Activated naive CD4-positive, alpha-beta T cell treated with anti-CD3 and anti-CD28 coated beads for 36 hours (primary cell): ENCODE measurements at regions of chr10 and their contacts with region 1.

Region 1: GRCh38 chr10:117216611-117217195 is 19.4 kb downstream of the KCNK18 start:
- DNase-seq: peak; percentile 64
- H3K4me3 Mint-ChIP-seq: peak overlapping the region; percentile 70
- H3K27ac Mint-ChIP-seq: no peak overlapping the region
- H3K4me1 Mint-ChIP-seq: no peaks in the 10 kb centered on the region
- H3K27me3 Mint-ChIP-seq: peaks cover 35% of the 10 kb centered on the region

Region 2: DNA sequence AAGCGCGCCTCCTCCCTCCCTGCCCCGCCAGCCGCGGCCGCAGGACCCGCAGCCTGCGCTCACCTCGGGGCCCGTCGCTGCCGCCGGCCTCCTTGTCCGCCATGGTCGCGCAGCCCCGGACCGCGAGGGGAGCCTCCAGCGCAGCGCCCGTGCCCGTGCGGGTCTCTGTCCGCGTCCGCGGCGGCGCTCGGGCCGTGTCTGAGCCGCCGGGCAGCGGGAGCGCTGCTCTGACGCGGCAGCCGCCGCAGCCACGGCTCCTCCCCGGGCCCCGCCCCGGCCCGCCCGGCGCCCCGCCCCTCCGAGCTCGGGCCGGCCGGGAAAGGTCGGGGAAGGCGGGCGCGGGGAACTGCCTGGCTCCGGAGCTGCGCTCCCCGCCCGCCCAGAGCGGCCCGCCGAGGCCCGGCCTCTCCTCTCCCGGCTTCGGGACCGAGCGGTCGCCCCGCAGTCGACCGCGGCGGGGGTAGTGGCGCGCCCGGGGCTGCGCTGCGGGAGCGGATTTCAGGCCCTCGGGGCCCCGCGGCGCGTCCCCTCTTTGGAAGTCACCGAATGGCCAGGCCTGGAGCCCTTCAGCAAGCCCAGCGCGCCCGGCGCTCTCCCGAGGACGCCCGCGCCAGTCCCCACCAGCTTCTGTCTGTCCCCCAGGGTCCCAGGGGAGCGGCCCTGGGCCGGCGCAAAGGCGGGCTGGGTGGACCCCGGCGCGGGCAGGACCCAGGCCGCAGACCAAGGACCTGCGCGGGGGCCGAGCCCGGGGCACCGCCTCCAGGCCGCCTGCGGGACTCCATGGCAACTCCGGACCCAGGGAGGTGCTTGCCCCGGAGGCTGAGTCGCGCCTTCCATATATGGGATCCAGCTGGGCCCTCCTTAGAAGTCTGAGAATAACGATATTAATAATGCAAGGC is 474.1 kb before region 1 on chr10 and contains the start of gene HSPA12A:
- CTCF ChIA-PET with region 1: no interaction called
- intact Hi-C with region 1: no loop called
- DNase-seq: peak; percentile 50
- H3K4me3 Mint-ChIP-seq: peak within 1 kb of the TSS; percentile 43
- H3K27ac Mint-ChIP-seq: no peak within 1 kb of the TSS
- H3K4me1 Mint-ChIP-seq: peaks cover 1% of the 10 kb centered on the region
- H3K27me3 Mint-ChIP-seq: peaks cover 72% of the 10 kb centered on the region
- total RNA-seq, gene HSPA12A: 0.05 TPM in 1 of 2 experiments, not detected in the other

Region 3: DNA sequence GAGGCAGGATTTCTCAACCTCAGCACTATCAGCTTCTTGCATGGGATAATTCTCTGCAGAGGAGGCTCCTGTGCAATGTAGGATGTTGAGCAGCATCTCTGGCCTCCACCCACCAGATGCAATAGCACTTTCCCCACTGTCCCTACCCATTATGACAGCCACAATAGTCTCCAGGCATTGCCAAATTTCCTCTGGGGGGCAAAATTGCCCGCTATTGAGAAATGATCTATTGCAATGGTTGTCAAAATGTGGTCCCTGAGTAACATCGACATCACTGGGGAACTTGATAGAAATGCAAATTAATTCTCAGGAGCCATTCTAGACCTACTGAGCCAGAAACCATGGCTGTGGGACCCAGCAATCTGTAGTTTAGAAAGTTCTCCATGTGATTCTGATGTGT is 12.4 kb before region 1 on chr10:
- CTCF ChIA-PET with region 1: interaction called, 16 read pairs
- intact Hi-C with region 1: no loop called
- DNase-seq: no peak
- H3K4me3 Mint-ChIP-seq: no peak overlapping the region
- H3K27ac Mint-ChIP-seq: no peak overlapping the region
- H3K4me1 Mint-ChIP-seq: no peaks in the 10 kb centered on the region
- H3K27me3 Mint-ChIP-seq: peaks cover 24% of the 10 kb centered on the region

Region 4: GRCh38 chr10:117246997-117247671 is 30.4 kb after region 1 on chr10:
- CTCF ChIA-PET with region 1: interaction called, 15 read pairs
- intact Hi-C with region 1: no loop called
- DNase-seq: no peak
- H3K4me3 Mint-ChIP-seq: no peak overlapping the region
- H3K27ac Mint-ChIP-seq: no peak overlapping the region
- H3K4me1 Mint-ChIP-seq: no peaks in the 10 kb centered on the region
- H3K27me3 Mint-ChIP-seq: peaks cover 58% of the 10 kb centered on the region

Region 5: DNA sequence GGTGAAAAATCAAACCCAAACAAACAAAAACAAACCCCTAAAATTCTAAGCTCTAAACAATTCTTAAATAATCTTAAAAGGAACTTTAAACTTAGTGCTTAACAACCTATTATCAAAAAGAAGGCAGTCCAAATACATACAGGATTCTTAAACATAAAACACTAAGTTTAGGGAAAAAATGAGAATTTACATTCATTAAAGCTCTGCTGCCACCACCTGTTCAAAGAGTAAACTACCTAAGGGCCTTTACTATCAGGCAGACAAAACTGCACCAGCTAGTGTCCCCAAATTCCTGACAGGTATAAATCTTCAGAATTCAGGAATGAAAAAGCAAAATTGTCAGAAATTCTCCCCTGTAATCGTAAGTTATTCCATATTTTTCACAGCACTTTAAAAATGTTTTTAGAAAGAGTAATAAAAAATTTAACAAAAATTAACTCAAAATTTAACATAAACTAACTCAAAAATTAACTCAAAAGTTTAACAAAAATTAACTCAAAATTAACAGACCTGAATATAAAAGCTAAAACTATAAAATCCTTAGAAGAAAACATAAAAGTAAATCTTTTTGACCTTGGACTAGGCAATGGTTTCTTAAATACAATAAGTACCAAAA is 103.5 kb after region 1 on chr10:
- CTCF ChIA-PET with region 1: interaction called, 87 read pairs
- intact Hi-C with region 1: loop called (anchors 1 kb)
- DNase-seq: peak; percentile 8
- H3K4me3 Mint-ChIP-seq: no peak overlapping the region
- H3K27ac Mint-ChIP-seq: no peak overlapping the region
- H3K4me1 Mint-ChIP-seq: no peaks in the 10 kb centered on the region
- H3K27me3 Mint-ChIP-seq: no peaks in the 10 kb centered on the region

Region 6: GRCh38 chr10:117442944-117443685 is 226.4 kb after region 1 on chr10:
- CTCF ChIA-PET with region 1: interaction called, 6 read pairs
- intact Hi-C with region 1: loop called (anchors 5 kb)
- DNase-seq: peak; percentile 65
- H3K4me3 Mint-ChIP-seq: no peak overlapping the region
- H3K27ac Mint-ChIP-seq: no peak overlapping the region
- H3K4me1 Mint-ChIP-seq: no peaks in the 10 kb centered on the region
- H3K27me3 Mint-ChIP-seq: peaks cover 19% of the 10 kb centered on the region

Region 7: GRCh38 chr10:118241229-118242137 is 1024.8 kb after region 1 on chr10:
- CTCF ChIA-PET with region 1: interaction called, 4 read pairs
- intact Hi-C with region 1: loop called (anchors 2 kb)
- DNase-seq: peak; percentile 82
- H3K4me3 Mint-ChIP-seq: no peak overlapping the region
- H3K27ac Mint-ChIP-seq: no peak overlapping the region
- H3K4me1 Mint-ChIP-seq: no peaks in the 10 kb centered on the region
- H3K27me3 Mint-ChIP-seq: peaks cover 52% of the 10 kb centered on the region